Right cardiac atrium (tissue), 5 donors: ENCODE measurements at regions of chr4 and their contacts with region 1.

Region 1: DNA sequence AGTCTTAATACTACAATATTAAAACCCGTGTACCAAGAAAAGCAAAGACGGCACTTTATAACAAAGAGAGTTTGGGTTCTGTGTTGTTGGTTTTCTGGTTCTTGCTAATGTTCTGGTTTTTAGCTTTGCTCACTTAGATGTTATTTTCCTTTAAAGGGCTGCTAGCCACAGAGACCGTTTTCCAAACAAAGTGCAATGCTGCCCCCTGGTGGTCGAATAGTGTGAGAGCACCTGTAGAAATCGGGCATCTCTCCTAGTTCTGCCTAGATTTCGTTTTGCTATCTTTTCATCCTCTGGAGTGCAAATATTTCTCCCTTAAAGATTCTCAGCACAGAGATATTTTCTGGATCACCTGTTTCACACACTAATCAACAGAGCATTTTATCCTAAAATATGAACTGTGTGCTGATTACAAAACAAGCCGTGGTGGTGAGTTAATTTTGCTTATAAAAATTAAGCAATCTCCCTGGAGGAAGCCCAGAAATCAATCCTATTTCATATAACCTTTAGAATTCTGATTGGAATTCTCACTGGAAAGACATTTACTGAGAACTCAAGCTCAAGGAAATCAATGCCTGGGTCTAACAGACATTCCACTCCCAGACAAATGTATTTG is 334.5 kb upstream of the NOCT start:
- DNase-seq: peak; percentile 76 to 85 (median 81)
- ATAC-seq: peak; percentile 71 to 73
- H3K4me3 ChIP-seq: no peak overlapping the region
- H3K27ac ChIP-seq: no peak overlapping the region
- H3K4me1 ChIP-seq: no peaks in the 10 kb centered on the region
- H3K27me3 ChIP-seq: no peaks in the 10 kb centered on the region

Region 2: DNA sequence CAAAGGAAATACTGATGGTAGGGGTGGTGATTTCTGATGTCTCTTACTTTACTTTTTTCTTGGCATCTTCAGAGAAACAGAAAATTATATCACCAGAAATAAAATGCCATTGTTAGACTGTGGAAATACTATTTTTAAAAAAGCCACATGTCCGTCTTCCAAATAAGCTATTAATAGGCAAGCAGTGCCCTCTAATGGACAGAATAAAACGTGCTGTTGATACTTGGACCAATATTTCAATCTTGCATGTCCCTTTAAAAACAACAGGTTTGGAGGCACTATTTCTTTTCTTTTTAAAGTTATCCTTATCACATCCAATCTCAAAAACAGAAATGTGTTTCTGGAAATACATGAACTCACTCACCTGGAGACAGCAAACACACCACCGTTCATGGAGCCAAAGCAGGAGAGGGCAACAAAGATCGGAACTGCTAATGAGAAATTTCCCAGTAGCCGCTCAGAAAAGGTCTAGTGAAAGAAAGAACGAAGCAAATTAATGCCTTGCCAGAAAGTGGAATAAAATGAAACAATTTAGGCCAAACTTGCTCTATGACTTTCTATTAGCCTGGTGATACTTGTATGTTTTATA is 498.2 kb before region 1 on chr4:
- intact Hi-C with region 1: loop called in 1 of 4 experiments (anchors 10 kb)
- DNase-seq: no peak
- ATAC-seq: peak in 1 of 2 donors; percentile 49
- H3K4me3 ChIP-seq: no peak overlapping the region
- H3K27ac ChIP-seq: no peak overlapping the region
- H3K4me1 ChIP-seq: peaks cover 6% of the 10 kb centered on the region
- H3K27me3 ChIP-seq: no peaks in the 10 kb centered on the region

Region 3: DNA sequence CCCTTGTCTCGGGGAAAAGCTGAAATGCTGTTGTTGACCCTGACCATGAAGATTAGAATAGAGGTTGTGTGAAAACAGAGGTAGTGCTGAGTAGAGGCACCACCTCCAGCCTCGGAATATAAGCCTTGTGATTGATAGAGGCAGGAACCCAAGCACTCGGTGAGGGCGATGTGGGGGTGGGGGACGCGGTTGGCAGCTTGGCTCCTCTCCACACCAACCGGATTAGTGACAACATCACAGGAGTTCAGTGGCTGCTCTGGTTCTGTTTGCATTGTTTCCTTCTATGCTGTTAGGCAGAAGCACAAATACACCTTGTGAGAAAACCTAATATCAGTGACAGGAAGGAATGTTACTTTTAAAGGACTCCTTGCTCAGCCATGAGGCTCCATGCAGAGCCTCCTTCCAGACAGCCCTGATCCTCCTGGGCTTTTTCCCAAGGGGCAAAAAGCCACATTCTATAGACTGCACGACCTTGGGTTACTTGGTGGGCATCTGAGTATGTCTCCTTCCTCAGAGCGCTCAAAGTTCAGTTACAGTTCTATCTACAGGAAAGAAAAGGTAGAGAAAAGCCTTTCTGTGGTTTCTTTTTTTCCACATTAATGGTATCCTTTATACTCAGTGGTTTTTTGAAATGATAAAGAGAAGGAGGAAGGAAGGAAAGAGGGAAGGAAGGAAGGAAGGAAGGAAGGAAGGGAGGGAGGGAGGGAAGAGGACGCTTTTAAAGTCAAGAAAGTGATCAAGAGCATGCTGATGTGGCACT is 184.0 kb after region 1 on chr4:
- intact Hi-C with region 1: loop called in 2 of 4 experiments (anchors 5 to 10 kb)
- DNase-seq: peak in 1 of 3 donors; percentile 41
- ATAC-seq: no peak
- H3K4me3 ChIP-seq: no peak overlapping the region
- H3K27ac ChIP-seq: no peak overlapping the region
- H3K4me1 ChIP-seq: peaks cover 2% of the 10 kb centered on the region
- H3K27me3 ChIP-seq: no peaks in the 10 kb centered on the region